A673 (cell line): ENCODE measurements at regions of chr9 and their contacts with region 1.

Region 1: GRCh38 chr9:126781186-126782052 is 23.4 kb upstream of the ZBTB43 start:
- DNase-seq: peak; percentile 91
- H3K4me3 ChIP-seq: peak overlapping the region; percentile 36
- H3K27ac ChIP-seq: no peak overlapping the region
- H3K4me1 ChIP-seq: peaks cover 6% of the 10 kb centered on the region
- H3K27me3 ChIP-seq: no peaks in the 10 kb centered on the region
- CTCF ChIP-seq: peak; percentile 94

Region 2: DNA sequence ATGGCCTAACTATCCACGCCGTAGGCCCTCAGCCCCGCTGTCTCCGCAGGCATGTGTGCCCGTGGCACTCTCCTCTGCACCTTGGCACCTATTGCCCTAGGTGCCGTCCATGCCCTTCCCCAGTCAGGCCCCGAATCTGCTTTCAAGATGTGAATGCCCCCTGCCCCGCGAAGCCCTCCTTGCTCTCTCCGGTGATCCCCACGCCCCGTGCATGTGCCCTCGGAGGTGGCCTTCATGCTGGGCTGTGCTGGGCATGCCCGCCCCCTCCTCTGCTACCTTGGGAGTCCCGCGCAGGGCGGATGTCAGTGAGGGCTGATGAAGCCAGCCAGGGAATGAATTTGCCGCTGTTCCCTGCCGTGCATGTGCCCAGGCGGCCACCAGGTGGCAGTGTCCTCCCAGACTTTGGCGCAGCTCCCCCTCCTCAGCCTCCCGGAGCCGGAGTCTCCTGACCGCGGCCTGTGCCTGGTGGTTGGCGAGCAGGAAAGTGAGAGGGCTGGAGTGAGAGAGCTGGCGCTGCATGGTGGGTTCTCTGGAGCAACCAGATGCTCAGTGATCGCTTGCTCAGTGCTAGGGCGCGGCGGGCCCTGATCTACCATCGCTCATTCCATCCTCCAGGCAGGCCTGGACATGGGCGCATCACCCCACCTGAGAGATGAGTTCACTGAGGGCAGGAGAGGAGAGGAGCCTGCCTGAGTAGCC is 280.6 kb before region 1 on chr9:
- CTCF ChIA-PET with region 1: interaction called, 21 read pairs
- POLR2A ChIA-PET with region 1: no interaction called
- intact Hi-C with region 1: loop called (anchors 1 kb)
- DNase-seq: peak; percentile 82
- H3K4me3 ChIP-seq: no peak overlapping the region
- H3K27ac ChIP-seq: no peak overlapping the region
- H3K4me1 ChIP-seq: no peaks in the 10 kb centered on the region
- H3K27me3 ChIP-seq: no peaks in the 10 kb centered on the region
- CTCF ChIP-seq: peak; percentile 98

Region 3: DNA sequence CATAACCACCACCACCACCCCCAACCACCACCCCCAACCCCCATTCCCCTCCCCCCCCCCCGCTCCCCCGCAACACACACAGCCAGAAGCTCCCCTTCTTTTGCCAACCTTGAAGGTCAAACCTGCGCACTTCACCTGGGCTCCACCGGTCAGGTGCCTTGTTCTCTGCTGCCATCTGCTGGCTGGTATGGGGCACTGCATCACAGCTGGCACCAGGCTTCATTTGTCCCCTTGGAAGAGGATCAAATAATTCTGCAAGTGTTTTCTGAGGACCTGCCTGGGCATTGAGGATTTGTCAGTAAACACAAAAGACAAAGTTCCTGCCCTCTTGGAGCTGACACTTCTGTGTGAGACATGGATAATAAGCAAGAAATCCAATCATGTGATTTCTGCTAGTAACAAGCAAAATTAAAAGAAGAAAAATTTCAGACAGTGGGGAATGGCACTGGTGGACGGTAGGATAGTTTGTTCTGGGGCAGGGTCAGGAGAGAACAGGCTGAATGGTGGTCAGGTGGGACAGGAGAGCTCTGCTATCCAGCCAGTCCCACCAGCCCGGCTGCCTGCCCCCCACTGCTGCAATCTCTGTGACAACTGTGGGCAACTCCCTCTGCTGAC is 223.3 kb before region 1 on chr9:
- CTCF ChIA-PET with region 1: no interaction called
- POLR2A ChIA-PET with region 1: no interaction called
- intact Hi-C with region 1: loop called (anchors 5 kb)
- DNase-seq: peak; percentile 46
- H3K4me3 ChIP-seq: no peak overlapping the region
- H3K27ac ChIP-seq: no peak overlapping the region
- H3K4me1 ChIP-seq: no peaks in the 10 kb centered on the region
- H3K27me3 ChIP-seq: peaks cover 42% of the 10 kb centered on the region
- CTCF ChIP-seq: peak; percentile 89

Region 4: DNA sequence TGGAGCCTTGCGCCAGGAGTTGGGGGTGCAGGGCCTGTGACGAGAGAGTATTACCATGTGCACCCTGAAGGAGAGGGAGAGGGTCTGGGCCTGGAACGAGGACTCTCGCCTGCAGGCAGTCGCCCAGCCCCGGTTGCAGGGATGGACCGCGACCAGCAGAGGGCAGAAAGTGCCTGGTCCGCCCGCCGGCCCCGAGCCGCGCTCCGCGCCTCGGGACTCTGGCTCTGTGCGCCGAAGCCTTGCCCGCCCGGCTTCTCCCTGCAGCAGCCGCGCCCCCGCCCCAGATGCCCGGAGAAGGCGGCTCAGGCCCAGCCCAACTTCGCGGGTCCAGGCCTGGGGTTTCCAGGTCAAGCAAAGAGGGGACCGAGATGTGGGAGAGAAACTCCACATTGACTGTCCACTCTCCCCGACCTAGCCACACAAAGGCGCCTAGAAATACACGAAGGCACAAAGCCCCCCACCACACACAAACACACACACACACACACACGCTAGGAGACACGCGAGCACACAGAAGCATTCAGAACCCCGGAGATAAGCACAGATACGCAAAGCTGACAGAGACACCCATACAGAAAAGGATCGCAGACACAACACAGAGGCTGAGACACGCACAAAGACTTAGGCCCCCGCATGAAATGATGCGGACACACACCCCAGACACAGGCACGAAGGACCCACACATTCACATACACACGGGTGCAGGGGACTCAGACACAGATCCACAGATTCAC is 169.7 kb before region 1 on chr9:
- CTCF ChIA-PET with region 1: interaction called, 5 read pairs
- POLR2A ChIA-PET with region 1: no interaction called
- intact Hi-C with region 1: loop called (anchors 1 kb)
- DNase-seq: peak; percentile 80
- H3K4me3 ChIP-seq: no peak overlapping the region
- H3K27ac ChIP-seq: no peak overlapping the region
- H3K4me1 ChIP-seq: peaks cover 16% of the 10 kb centered on the region
- H3K27me3 ChIP-seq: peaks cover 94% of the 10 kb centered on the region
- CTCF ChIP-seq: peak; percentile 86

Region 5: GRCh38 chr9:126704873-126705766 is 76.3 kb before region 1 on chr9:
- CTCF ChIA-PET with region 1: interaction called, 102 read pairs
- POLR2A ChIA-PET with region 1: no interaction called
- intact Hi-C with region 1: loop called (anchors 1 kb)
- DNase-seq: peak; percentile 81
- H3K4me3 ChIP-seq: peak overlapping the region; percentile 14
- H3K27ac ChIP-seq: no peak overlapping the region
- H3K4me1 ChIP-seq: peaks cover 17% of the 10 kb centered on the region
- H3K27me3 ChIP-seq: peaks cover 5% of the 10 kb centered on the region
- CTCF ChIP-seq: peak; percentile 93

Region 6: GRCh38 chr9:126763130-126763764 is 18.2 kb before region 1 on chr9:
- CTCF ChIA-PET with region 1: no interaction called
- POLR2A ChIA-PET with region 1: no interaction called
- intact Hi-C with region 1: no loop called
- DNase-seq: peak; percentile 30
- H3K4me3 ChIP-seq: no peak overlapping the region
- H3K27ac ChIP-seq: no peak overlapping the region
- H3K4me1 ChIP-seq: no peaks in the 10 kb centered on the region
- H3K27me3 ChIP-seq: no peaks in the 10 kb centered on the region
- CTCF ChIP-seq: no peak

Region 7: DNA sequence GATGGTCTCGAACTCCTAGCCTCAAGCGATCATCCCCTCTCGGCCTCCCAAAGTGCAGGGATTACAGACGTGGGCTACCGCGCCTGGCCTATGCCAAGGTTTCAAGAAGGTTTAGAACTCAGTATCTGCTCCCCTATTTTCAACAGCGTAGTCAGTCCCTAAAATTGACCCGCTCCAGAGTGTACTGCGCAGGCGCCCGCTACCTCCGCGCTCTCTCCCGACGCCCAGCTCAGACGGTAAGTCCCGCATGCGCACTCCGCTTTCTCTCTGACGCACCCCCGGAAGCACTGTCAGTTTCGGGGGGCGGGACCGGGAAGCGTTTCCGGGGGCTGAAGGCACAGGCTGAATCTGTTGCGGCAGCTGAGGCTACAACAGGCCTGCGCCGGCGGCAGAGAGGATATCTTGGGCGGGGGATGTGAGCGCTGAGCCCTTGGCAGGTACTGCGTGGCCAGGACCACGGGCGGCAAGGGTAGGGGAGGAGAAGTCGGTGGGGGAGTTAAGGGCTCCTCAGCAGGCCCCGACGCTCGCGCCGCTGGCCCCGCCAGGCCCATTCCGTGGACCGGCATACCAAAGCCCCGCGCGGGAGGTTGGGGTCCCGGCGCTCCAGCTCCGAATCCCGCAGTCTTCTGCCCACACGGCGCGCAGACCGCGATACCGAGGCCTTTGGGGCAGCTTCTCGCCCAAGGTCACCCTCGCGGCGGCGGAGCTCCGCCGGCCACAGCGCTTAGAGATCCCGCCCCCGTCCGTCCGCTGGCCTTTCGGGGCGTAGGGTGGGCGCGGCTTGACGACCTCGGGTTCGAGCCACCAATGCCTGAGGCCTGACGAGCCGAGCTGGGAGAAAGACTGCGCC is 23.5 kb after region 1 on chr9 and contains the start of gene ZBTB43:
- CTCF ChIA-PET with region 1: interaction called, 10 read pairs
- POLR2A ChIA-PET with region 1: no interaction called
- intact Hi-C with region 1: no loop called
- DNase-seq: peak; percentile 98
- H3K4me3 ChIP-seq: peak within 1 kb of the TSS; percentile 98
- H3K27ac ChIP-seq: peak within 1 kb of the TSS; percentile 84
- H3K4me1 ChIP-seq: peaks cover 16% of the 10 kb centered on the region
- H3K27me3 ChIP-seq: no peaks in the 10 kb centered on the region
- CTCF ChIP-seq: no peak
- total RNA-seq, gene ZBTB43: 13.8 and 20.3 TPM in 2 replicates

Region 8: DNA sequence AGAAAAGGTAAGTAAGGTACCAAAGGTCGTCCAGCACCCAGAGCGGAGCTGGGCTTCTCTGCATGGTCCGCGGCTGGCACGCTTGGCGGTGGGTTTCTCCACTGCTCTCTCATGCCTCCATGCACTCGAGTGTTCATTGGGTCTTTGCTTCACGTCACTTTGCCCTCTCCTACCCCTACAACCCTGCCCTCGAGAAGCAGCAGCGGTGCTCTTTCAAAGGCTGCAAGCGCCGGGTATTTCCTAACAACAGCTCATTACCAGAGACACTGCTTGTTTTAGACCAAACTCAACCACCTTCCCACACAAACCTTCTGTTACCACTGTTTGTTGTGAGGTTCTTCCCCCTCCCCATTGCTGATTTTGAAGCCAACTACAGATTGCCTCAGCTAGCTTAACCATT is 57.5 kb after region 1 on chr9:
- CTCF ChIA-PET with region 1: no interaction called
- POLR2A ChIA-PET with region 1: no interaction called
- intact Hi-C with region 1: no loop called
- DNase-seq: no peak
- H3K4me3 ChIP-seq: no peak overlapping the region
- H3K27ac ChIP-seq: no peak overlapping the region
- H3K4me1 ChIP-seq: peaks cover 2% of the 10 kb centered on the region
- H3K27me3 ChIP-seq: no peaks in the 10 kb centered on the region
- CTCF ChIP-seq: no peak